GM10248 (cell line): ENCODE measurements at regions of chr18 and their contacts with region 1.

Region 1: GRCh38 chr18:2589345-2590068 is 18.1 kb downstream of the NDC80 start:
- DNase-seq: no peak
- CTCF ChIP-seq: no peak

Region 2: DNA sequence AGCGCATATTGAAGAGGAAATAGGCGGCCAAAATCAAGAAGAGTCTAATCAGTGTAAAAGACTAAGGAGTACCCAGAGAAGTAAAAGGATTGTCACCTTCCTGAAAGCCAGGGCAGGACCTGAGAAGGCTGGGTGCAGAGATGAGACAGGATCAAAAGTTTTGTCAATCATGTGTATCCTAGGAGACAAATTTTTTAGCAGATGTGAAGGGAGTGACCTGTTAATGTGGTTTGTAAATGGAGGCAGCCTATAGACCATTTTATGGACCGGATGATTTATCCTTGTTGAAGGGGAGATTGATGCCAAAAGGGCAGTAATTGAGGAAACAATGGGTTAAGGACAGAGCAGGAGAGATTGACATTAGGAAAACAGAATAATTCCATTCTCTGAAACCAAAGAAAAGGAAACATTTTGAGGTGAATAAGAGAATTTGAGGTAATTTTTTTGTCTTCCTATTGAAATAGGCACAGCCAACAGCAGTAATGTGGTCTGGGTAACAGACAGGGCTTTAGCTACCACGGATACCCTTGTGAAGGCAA is 17.3 kb before region 1 on chr18:
- CTCF ChIA-PET with region 1: interaction called, 13 read pairs
- POLR2A ChIA-PET with region 1: no interaction called
- DNase-seq: no peak
- CTCF ChIP-seq: no peak

Region 3: GRCh38 chr18:2672410-2672809 is 82.9 kb after region 1 on chr18:
- CTCF ChIA-PET with region 1: no interaction called
- POLR2A ChIA-PET with region 1: no interaction called
- DNase-seq: no peak
- CTCF ChIP-seq: no peak